AG04450 (cell line): ENCODE measurements at regions of chrX and their contacts with region 1.

Region 1: DNA sequence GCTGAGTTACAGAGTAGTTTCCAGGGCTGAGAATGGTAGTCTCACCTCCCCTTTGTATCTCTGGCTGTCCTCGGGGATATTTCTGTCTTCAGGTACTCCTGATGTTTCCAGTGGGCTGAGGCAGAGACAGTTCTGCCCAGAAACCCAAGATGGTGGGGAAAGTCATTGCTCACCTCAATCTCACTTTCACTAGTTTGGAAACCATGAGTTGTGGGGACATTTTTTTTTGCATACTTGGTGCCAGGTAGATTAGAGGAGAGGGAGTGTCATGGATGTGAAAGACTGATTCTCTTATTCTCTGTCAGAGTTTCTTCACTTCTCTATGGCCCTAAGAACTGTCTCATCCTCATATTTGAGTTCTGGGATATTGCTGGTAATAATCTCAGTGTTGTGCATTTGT is 708.6 kb upstream of the MAGEB2 start:
- DNase-seq: no peak
- H3K4me3 ChIP-seq: no peak overlapping the region
- H3K27ac ChIP-seq: no peak overlapping the region
- H3K27me3 ChIP-seq: no peaks in the 10 kb centered on the region
- CTCF ChIP-seq: no peak

Region 2: GRCh38 chrX:29254515-29254914 is 252.2 kb before region 1 on chrX:
- CTCF ChIA-PET with region 1: no interaction called
- POLR2A ChIA-PET with region 1: no interaction called
- DNase-seq: no peak
- H3K4me3 ChIP-seq: no peak overlapping the region
- H3K27ac ChIP-seq: no peak overlapping the region
- H3K27me3 ChIP-seq: no peaks in the 10 kb centered on the region
- CTCF ChIP-seq: no peak

Region 3: GRCh38 chrX:29318012-29318411 is 188.7 kb before region 1 on chrX:
- CTCF ChIA-PET with region 1: no interaction called
- POLR2A ChIA-PET with region 1: no interaction called
- DNase-seq: no peak
- H3K4me3 ChIP-seq: no peak overlapping the region
- H3K27ac ChIP-seq: no peak overlapping the region
- H3K27me3 ChIP-seq: no peaks in the 10 kb centered on the region
- CTCF ChIP-seq: no peak

Region 4: DNA sequence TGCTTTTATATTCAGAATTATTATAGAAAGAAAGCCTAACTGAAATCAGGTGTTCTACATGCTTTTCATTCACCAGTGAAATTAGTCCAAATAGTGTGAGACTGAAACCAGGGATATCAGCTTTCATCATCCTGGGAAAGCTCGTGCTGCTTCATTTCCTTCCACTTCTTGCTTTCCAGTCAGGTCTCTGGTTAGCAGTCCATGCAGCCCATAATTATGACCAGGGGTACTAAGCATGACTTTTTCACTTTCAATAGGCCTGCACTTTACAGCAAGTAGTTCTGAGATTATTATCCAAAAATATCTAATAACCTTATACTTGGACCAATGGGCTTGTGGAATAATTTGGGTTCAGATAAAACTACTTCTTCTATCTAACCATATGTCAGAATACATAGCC is 35.4 kb after region 1 on chrX:
- CTCF ChIA-PET with region 1: no interaction called
- POLR2A ChIA-PET with region 1: no interaction called
- DNase-seq: no peak
- H3K4me3 ChIP-seq: no peak overlapping the region
- H3K27ac ChIP-seq: no peak overlapping the region
- H3K27me3 ChIP-seq: no peaks in the 10 kb centered on the region
- CTCF ChIP-seq: no peak

Region 5: GRCh38 chrX:30468471-30468870 is 961.7 kb after region 1 on chrX:
- CTCF ChIA-PET with region 1: no interaction called
- POLR2A ChIA-PET with region 1: interaction called, 11 read pairs
- DNase-seq: no peak
- H3K4me3 ChIP-seq: no peak overlapping the region
- H3K27ac ChIP-seq: no peak overlapping the region
- H3K27me3 ChIP-seq: no peaks in the 10 kb centered on the region
- CTCF ChIP-seq: no peak